K562 (cell line): ENCODE measurements at regions of chr1 and their contacts with region 1.

Region 1: GRCh38 chr1:210584439-210585113 is 255.9 kb downstream of the HHAT start:
- DNase-seq: peak; percentile 67 to 84 (median 74)
- ATAC-seq: peak; percentile 99
- H3K4me3 ChIP-seq: no peak overlapping the region
- H3K27ac ChIP-seq: no peak overlapping the region
- H3K4me1 ChIP-seq: no peaks in the 10 kb centered on the region; a peak in 1 of 5 replicates
- H3K27me3 ChIP-seq: no peaks in the 10 kb centered on the region
- CTCF ChIP-seq: peak; percentile 73 to 84 (median 80)
- EP300 ChIP-seq: no peak
- POLR2A ChIP-seq: no peak
- RAD21 ChIP-seq: peak; percentile 86 to 89

Region 2: DNA sequence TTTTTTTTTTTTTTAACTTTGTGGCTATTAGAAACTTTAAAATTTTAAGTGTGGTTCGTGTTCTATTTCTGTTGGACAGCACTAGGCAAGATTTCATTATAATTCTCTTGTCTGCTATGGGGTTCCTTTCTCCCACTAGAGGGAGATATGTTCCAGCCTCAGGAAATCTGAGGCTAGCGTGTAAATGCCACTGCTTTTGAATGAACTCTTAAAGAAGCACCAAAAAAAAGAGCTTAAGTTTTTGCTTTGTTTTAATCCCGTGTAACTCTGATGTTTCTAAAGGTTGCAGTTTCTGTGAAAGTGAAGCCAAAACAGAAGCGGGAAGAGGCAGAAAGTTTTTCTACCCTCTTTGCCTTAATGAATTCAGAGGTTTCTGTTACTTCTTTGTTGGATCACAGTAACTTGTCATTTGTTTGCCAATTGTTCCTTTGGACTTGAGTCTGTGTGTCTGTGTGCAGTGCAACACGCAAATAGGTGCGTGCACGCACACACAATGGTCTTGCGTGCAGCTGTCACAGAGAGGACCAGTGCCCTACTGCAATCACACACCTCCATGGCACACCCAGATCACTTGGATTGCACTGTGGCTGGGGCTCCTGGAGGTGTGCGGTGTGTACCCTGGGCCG is 223.6 kb before region 1 on chr1:
- CTCF ChIA-PET with region 1: no interaction called
- POLR2A ChIA-PET with region 1: no interaction called
- in situ Hi-C with region 1: no loop called
- intact Hi-C with region 1: no loop called
- DNase-seq: peak in 2 of 4 experiments; percentile 24
- ATAC-seq: peak; percentile 82
- H3K4me3 ChIP-seq: no peak overlapping the region
- H3K27ac ChIP-seq: no peak overlapping the region
- H3K4me1 ChIP-seq: no peaks in the 10 kb centered on the region
- H3K27me3 ChIP-seq: peaks cover 0 to 4% of the 10 kb centered on the region in 2 experiments; a peak in 1 of 5 replicates
- CTCF ChIP-seq: peak; percentile 3 to 55 (median 41); a peak in 4 of 6 replicates
- EP300 ChIP-seq: no peak
- POLR2A ChIP-seq: no peak
- RAD21 ChIP-seq: no peak

Region 3: DNA sequence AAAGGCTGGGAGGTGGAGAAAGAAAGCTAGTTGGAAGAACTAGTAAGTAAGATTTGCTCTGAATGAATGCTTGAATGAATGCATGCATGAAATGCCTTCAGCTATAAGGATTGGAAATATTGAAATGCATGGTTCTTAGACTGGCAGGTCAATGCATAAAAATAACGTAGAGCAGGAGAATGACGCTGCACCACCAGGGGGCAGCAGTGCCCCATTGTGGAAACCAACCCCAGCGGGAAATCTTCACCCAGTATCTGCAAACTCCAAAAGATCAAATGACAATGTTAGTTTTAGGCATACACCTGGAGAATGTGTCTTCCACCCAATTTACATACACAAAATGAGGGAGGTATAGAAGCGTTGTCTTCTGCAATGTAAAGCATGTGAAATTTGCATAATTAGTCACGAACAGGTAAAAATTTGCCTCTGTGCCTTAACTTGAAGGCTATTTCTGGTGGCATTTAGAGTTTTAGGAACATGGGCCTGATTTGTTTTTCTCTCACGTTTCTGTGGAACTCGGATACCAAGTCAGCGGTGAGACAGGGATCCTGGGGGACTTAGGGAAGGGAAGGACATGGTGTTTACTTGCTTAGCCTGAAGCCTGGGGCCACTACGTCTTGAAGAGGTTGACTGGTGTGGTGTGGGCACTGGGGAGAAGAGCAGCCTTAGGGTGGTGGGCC is 177.2 kb before region 1 on chr1:
- CTCF ChIA-PET with region 1: no interaction called
- POLR2A ChIA-PET with region 1: no interaction called
- in situ Hi-C with region 1: no loop called
- intact Hi-C with region 1: loop called (anchors 5 kb)
- DNase-seq: peak; percentile 68 to 75 (median 71)
- ATAC-seq: peak; percentile 91
- H3K4me3 ChIP-seq: no peak overlapping the region
- H3K27ac ChIP-seq: no peak overlapping the region
- H3K4me1 ChIP-seq: no peaks in the 10 kb centered on the region
- H3K27me3 ChIP-seq: no peaks in the 10 kb centered on the region; a peak in 1 of 5 replicates
- CTCF ChIP-seq: peak; percentile 77 to 89 (median 89)
- EP300 ChIP-seq: no peak
- POLR2A ChIP-seq: no peak
- RAD21 ChIP-seq: peak; percentile 74 to 87

Region 4: GRCh38 chr1:210448297-210448892 is 136.2 kb before region 1 on chr1:
- CTCF ChIA-PET with region 1: no interaction called
- POLR2A ChIA-PET with region 1: no interaction called
- in situ Hi-C with region 1: no loop called
- intact Hi-C with region 1: loop called (anchors 5 kb)
- DNase-seq: peak; percentile 33 to 44 (median 41)
- ATAC-seq: peak; percentile 82
- H3K4me3 ChIP-seq: no peak overlapping the region
- H3K27ac ChIP-seq: no peak overlapping the region
- H3K4me1 ChIP-seq: no peaks in the 10 kb centered on the region
- H3K27me3 ChIP-seq: peaks cover 0 to 8% of the 10 kb centered on the region in 2 experiments; a peak in 3 of 5 replicates
- CTCF ChIP-seq: peak; percentile 42 to 73 (median 56); a peak in 5 of 6 replicates
- EP300 ChIP-seq: no peak
- POLR2A ChIP-seq: no peak
- RAD21 ChIP-seq: peak; percentile 88 to 89

Region 5: GRCh38 chr1:210951279-210951678 is 366.7 kb after region 1 on chr1:
- CTCF ChIA-PET with region 1: interaction called, 6 read pairs
- POLR2A ChIA-PET with region 1: no interaction called
- in situ Hi-C with region 1: no loop called
- intact Hi-C with region 1: loop called (anchors 2 kb)
- DNase-seq: no peak
- ATAC-seq: no peak
- H3K4me3 ChIP-seq: no peak overlapping the region
- H3K27ac ChIP-seq: no peak overlapping the region
- H3K4me1 ChIP-seq: no peaks in the 10 kb centered on the region
- H3K27me3 ChIP-seq: peaks cover 0 to 5% of the 10 kb centered on the region in 2 experiments; a peak in 2 of 5 replicates
- CTCF ChIP-seq: no peak
- EP300 ChIP-seq: no peak
- POLR2A ChIP-seq: no peak
- RAD21 ChIP-seq: no peak